GM13977 (cell line): ENCODE measurements at regions of chr14 and their contacts with region 1.

Region 1: DNA sequence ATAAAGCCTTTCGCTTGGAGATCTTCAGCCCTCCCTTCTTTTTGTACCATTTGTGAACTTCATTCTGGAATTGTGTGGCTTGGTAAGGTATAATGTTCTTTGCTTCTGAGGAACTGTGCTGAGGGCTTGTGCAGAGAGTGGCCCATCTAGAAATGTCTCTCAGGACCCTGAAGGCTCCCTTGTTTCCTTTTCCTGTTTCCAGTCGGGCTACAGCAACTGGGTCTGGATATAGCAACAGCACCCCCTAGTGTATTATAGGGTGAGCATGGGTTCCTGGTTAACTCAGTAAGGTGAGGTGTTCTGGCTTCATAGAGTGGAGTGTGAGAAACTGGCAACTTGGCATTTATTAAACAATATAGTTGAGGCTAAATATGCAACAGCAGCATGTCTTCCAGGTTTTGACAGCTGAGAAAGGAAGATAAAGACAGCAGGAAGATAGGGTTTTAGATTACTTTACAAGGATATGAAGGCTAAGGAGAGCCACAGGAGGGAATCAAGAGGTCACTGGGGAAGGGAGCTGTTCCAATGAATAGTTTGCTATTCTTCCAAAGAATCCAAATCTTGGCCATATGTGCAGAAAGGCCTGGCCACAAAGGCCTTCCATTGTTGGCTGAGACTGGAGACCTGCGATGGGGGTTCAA is 49.1 kb upstream of the RNU6-8 start:
- DNase-seq: peak; percentile 59
- CTCF ChIP-seq: peak; percentile 78

Region 2: GRCh38 chr14:31510222-31510621 is 741.9 kb before region 1 on chr14:
- in situ Hi-C with region 1: loop called (anchors 25 kb)
- DNase-seq: peak; percentile 22
- CTCF ChIP-seq: peak; percentile 49

Region 3: DNA sequence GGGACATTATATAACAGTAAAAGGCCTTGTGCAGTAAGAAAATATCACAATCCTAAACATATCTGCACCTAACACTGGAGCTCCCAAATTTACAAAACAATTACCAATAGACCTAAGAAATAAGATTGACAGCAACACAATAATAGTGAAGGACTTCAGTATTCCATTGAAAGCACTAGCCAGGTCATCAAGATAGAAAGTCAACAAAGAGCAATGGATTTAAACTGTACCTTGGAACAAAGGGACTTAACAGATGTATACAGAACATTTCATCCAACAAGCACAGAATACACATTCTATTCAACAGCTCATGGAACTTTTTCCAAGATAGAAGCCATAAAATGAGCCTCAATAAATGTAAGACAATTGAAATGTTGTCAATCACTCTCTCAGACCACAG is 384.6 kb before region 1 on chr14:
- in situ Hi-C with region 1: no loop called
- DNase-seq: no peak
- CTCF ChIP-seq: no peak

Region 4: GRCh38 chr14:31937721-31938346 is 314.3 kb before region 1 on chr14:
- in situ Hi-C with region 1: loop called (anchors 25 kb)
- DNase-seq: peak; percentile 58
- CTCF ChIP-seq: no peak

Region 5: GRCh38 chr14:32064931-32065330 is 187.2 kb before region 1 on chr14:
- in situ Hi-C with region 1: loop called (anchors 5 kb)
- DNase-seq: no peak
- CTCF ChIP-seq: no peak

Region 6: DNA sequence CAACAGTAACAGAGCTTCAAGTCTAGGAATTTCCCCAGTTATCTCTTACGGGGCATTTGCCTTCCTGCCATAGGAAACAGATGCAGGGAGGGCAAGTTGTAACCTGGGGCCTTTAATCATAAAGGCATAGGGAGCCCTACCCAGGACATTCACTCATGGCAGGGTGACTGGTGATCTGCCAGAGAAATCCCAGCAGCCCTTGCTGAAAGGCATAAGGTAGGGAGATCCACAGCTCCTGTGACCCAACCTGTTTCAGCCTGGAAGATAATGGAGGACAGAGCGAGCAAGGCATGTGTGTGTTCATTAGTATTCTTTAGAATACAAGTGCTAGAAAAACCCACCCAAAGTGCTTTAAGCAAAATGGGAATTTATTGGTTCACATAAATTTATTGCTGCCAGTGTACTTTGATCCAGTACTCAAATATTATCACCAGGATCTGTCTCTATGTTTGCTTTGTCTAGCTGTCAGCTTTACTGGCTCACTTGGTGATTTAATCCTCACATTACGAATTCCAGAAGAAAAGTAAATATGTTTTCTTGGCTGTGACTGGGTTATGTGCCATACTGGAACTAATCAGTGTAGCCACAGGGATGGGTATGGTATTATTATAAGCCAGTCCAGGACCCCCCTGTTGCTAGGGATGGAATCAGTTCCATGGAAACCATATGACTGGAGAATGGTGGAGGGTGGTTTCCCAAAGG is 55.9 kb after region 1 on chr14:
- in situ Hi-C with region 1: no loop called
- DNase-seq: no peak
- CTCF ChIP-seq: no peak

Region 7: GRCh38 chr14:32469388-32470160 is 217.4 kb after region 1 on chr14:
- in situ Hi-C with region 1: loop called (anchors 10 kb)
- DNase-seq: peak; percentile 26
- CTCF ChIP-seq: peak; percentile 53